MCF 10A (cell line): ENCODE measurements at regions of chr19 and their contacts with region 1.

Region 1: DNA sequence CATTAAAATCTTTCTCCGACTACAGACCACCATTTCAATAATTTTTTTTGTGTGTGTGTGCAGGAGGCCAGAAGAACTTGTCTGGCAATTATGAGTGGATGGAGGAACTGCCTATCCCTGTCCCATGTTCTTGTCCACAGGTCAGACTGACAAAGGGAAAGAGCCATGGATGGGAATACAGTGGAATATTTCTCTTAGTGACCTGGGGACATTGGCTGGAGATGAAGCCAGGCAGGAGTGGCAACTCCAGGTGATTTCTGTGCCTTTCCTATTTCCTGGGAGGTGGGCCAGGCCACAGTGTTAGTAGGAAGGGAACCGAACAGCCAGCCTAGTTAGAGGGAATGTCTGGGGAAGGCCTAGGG is 3.7 kb downstream of the PSG9 start:
- DNase-seq: no peak
- H3K4me3 Mint-ChIP-seq: peak overlapping the region; percentile 55
- H3K27ac Mint-ChIP-seq: peak overlapping the region; percentile 83
- H3K4me1 Mint-ChIP-seq: peaks cover 31% of the 10 kb centered on the region
- H3K27me3 Mint-ChIP-seq: no peaks in the 10 kb centered on the region
- CTCF ChIP-seq: no peak

Region 2: DNA sequence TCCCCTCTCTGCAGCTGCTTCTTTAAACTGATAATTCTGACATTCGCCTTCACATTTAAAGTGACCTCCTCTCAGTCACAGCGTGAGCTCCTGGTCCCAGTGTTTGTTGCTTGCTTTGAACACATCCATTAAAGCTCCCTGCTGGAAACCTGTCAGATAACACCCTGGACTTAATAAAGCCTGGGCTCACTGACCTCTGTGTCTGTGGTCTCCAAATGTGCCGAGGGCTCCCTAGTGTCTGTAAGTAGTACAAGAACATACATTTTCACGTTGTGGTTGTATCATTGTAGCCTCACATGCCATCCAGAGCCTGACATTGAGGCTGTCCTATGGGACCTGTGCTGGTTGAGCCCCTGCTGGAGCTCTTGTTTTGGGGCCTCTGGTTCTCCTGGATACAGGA is 57.7 kb before region 1 on chr19:
- CTCF ChIA-PET with region 1: no interaction called
- POLR2A ChIA-PET with region 1: no interaction called
- intact Hi-C with region 1: loop called (anchors 5 kb)
- DNase-seq: no peak
- H3K4me3 Mint-ChIP-seq: no peak overlapping the region
- H3K27ac Mint-ChIP-seq: no peak overlapping the region
- H3K4me1 Mint-ChIP-seq: peaks cover 3% of the 10 kb centered on the region
- H3K27me3 Mint-ChIP-seq: no peaks in the 10 kb centered on the region
- CTCF ChIP-seq: no peak

Region 3: DNA sequence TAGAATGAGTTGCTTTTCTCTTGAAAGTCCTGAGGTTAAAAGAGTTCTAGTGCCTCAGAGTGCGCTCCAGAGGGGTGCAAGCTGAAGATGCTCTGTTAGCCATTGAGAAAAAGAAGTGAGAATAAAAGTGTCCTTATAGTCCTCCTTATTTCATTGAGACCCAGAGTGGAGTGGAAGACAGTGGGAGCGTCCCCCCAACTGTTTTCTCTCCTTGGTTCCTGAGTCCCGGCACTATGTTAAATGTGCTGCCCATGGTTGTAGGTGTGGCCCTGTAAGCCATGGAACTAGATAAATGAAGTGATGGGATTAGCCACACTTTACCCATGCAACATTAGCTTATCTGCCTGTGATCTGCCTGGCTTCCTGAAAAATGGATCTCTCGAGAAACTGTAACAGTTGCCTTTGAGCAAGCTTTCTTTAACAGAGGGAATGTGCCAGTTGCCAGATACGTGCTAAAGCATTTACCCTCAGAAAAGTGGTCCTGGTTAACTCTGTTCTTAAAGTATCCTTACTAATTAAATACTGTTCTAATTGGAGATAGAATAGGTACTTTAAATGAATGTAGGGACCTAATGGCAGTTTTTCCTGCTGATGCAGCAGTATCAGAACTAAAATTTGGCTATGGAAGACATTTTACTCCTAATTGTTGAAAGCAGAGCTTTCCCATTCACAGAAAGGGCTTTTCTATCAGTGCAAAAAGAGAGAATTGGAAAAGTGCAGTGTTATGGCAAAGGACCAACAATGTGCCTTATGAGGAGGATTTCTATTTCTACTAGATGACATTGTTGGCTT is 25.1 kb after region 1 on chr19:
- CTCF ChIA-PET with region 1: no interaction called
- POLR2A ChIA-PET with region 1: no interaction called
- intact Hi-C with region 1: no loop called
- DNase-seq: peak; percentile 22
- H3K4me3 Mint-ChIP-seq: no peak overlapping the region
- H3K27ac Mint-ChIP-seq: no peak overlapping the region
- H3K4me1 Mint-ChIP-seq: no peaks in the 10 kb centered on the region
- H3K27me3 Mint-ChIP-seq: no peaks in the 10 kb centered on the region
- CTCF ChIP-seq: no peak